PC-9 (cell line): ENCODE measurements at regions of chr2 and their contacts with region 1.

Region 1: DNA sequence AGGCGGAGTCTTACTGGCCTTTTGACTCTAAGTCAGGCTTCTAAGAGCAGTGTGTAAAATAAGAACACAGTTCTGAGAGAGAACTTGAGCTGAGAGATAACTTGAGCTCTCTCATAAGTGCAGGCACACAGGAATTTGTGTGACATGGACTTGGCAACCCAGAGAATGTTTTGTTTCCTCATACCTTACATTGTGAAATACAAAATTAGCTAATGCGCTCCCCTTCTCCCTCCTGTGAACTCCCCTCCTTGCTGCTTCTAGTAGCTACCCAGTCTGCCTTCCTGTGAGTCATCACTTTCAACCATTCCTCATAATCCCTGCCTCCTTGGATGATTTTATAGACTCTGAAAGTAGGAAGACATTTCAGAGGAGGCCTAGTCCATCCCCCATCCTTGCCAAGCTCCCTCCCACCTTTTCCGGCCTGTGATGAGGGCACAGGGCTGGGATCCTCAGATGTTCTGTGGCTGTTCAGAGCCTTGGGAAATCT is 22.6 kb downstream of the FER1L5 start:
- DNase-seq: peak; percentile 76 to 99
- H3K4me3 ChIP-seq: peak overlapping the region; percentile 23; the same call in 1 of the 2 replicates
- H3K27ac ChIP-seq: peak overlapping the region; percentile 82
- H3K4me1 ChIP-seq: peaks cover 19% of the 10 kb centered on the region
- H3K27me3 ChIP-seq: no peaks in the 10 kb centered on the region
- CTCF ChIP-seq: no peak

Region 2: GRCh38 chr2:96514521-96514920 is 150.6 kb before region 1 on chr2:
- CTCF ChIA-PET with region 1: no interaction called
- POLR2A ChIA-PET with region 1: no interaction called
- intact Hi-C with region 1: no loop called
- DNase-seq: peak in 1 of 2 experiments; percentile 42
- H3K4me3 ChIP-seq: no peak overlapping the region
- H3K27ac ChIP-seq: no peak overlapping the region
- H3K4me1 ChIP-seq: no peaks in the 10 kb centered on the region
- H3K27me3 ChIP-seq: no peaks in the 10 kb centered on the region
- CTCF ChIP-seq: no peak

Region 3: GRCh38 chr2:96679848-96680247 is 14.7 kb after region 1 on chr2:
- CTCF ChIA-PET with region 1: no interaction called
- POLR2A ChIA-PET with region 1: interaction called, 16 read pairs
- intact Hi-C with region 1: no loop called
- DNase-seq: no peak
- H3K4me3 ChIP-seq: no peak overlapping the region
- H3K27ac ChIP-seq: no peak overlapping the region
- H3K4me1 ChIP-seq: no peaks in the 10 kb centered on the region
- H3K27me3 ChIP-seq: no peaks in the 10 kb centered on the region
- CTCF ChIP-seq: no peak

Region 4: DNA sequence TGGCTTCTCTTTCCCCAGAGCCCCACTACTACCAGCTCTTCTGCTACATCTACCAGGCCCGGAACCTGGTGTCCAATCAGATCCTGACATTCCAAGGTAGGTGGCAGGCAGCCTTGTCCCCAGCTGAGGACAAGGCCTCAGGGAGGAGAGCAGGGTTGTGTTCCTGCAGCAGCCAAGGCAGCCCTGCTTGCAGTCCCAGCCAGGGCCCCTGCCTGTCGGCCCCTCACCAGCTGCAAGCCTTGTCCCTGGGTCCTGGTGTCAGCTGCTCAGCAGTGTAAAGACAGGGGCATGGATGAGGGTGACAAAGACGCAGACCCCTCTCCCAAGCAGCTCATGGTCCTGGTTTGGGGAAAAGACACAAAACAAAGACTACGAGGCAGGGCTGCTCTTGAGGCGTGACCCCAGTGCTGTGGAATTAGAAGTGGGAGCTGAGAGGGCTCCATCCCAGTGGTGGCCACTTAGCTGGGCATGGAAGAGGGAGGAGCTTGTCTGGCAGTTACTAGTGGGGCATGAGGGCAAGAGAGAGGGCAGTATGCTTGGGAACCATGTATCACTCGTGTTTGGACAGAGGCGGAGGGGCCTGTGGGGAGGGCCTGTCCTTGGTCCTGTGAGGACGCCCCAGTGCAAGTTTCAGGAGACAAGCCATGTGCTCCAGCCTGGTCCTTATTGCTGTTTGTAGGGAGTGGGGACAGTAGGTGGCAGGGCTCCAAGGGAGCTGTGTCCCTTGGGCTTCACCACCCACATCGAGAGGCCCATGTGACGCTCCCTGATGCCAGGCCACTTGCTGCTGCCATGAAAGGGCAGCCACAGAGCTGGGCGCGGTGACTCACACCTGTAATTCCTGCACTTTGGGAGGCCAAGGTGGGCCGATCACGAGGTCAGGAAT is 27.2 kb after region 1 on chr2:
- CTCF ChIA-PET with region 1: no interaction called
- POLR2A ChIA-PET with region 1: no interaction called
- intact Hi-C with region 1: no loop called
- DNase-seq: no peak
- H3K4me3 ChIP-seq: no peak overlapping the region
- H3K27ac ChIP-seq: no peak overlapping the region
- H3K4me1 ChIP-seq: no peaks in the 10 kb centered on the region
- H3K27me3 ChIP-seq: no peaks in the 10 kb centered on the region
- CTCF ChIP-seq: no peak

Region 5: GRCh38 chr2:96715658-96716057 is 50.5 kb after region 1 on chr2:
- CTCF ChIA-PET with region 1: no interaction called
- POLR2A ChIA-PET with region 1: interaction called, 11 read pairs
- intact Hi-C with region 1: no loop called
- DNase-seq: no peak
- H3K4me3 ChIP-seq: no peak overlapping the region
- H3K27ac ChIP-seq: peak overlapping the region; percentile 48; the same call in 1 of the 2 replicates
- H3K4me1 ChIP-seq: peaks cover 11% of the 10 kb centered on the region
- H3K27me3 ChIP-seq: no peaks in the 10 kb centered on the region
- CTCF ChIP-seq: no peak

Region 6: GRCh38 chr2:96927405-96928243 is 262.5 kb after region 1 on chr2:
- CTCF ChIA-PET with region 1: no interaction called
- POLR2A ChIA-PET with region 1: interaction called, 10 read pairs
- intact Hi-C with region 1: no loop called
- DNase-seq: peak in 1 of 2 experiments; percentile 65
- H3K4me3 ChIP-seq: no peak overlapping the region
- H3K27ac ChIP-seq: no peak overlapping the region
- H3K4me1 ChIP-seq: peaks cover 11% of the 10 kb centered on the region; the same call in 1 of the 2 replicates
- H3K27me3 ChIP-seq: peaks cover 15% of the 10 kb centered on the region; the same call in 1 of the 2 replicates
- CTCF ChIP-seq: no peak